HCT116 (cell line): ENCODE measurements at regions of chr15 and their contacts with region 1.

Region 1: GRCh38 chr15:80242132-80242769 is 9.8 kb downstream of the CTXND1 start:
- DNase-seq: peak; percentile 28
- ATAC-seq: peak; percentile 97
- H3K4me3 ChIP-seq: no peak overlapping the region
- H3K27ac ChIP-seq: no peak overlapping the region
- H3K4me1 ChIP-seq: peaks cover 0 to 5% of the 10 kb centered on the region in 2 experiments; a peak in 1 of 4 replicates
- H3K27me3 ChIP-seq: peaks cover 10% of the 10 kb centered on the region; the same call in 1 of the 2 replicates
- CTCF ChIP-seq: peak; percentile 62 to 95 (median 86); a peak in 5 of 6 replicates
- POLR2A ChIP-seq: no peak
- RAD21 ChIP-seq: peak; percentile 61

Region 2: DNA sequence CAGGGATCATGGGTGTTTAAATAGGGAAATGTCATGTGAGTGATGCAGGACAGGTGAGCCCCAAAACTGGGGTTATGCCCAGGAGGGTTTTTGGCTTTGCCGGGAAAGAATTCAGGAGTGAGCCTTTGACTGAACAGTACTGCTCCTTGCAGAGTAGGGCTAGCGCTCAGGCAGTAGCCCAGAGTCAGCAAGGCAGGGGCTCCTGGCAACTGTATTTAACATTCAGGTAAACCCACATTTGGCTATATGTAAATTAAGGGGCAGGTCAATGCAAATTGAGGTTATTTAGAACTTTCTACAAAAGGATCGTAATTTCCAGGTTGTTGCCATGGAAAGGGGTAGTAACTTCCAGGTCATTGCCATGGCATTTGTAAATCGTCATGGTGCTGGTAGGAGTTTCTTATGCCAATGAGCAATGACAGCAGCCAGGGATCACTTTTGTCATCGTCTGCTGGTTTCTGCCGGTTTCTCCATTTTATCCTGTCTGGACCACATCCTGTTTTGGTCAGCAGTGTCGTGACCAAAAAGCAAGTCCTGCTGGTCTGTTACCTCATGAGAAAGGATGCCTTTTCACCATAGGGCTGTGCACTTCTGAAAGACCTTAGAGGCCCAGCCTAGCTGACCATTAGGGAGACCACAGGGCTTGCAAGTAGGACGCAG is 369.8 kb before region 1 on chr15:
- CTCF ChIA-PET with region 1: no interaction called
- POLR2A ChIA-PET with region 1: no interaction called
- RAD21 ChIA-PET with region 1: no interaction called
- intact Hi-C with region 1: no loop called
- DNase-seq: no peak
- ATAC-seq: no peak
- H3K4me3 ChIP-seq: no peak overlapping the region
- H3K27ac ChIP-seq: no peak overlapping the region
- H3K4me1 ChIP-seq: peaks cover 6 to 11% of the 10 kb centered on the region in 2 experiments; a peak in 2 of 4 replicates
- H3K27me3 ChIP-seq: no peaks in the 10 kb centered on the region
- CTCF ChIP-seq: no peak
- POLR2A ChIP-seq: no peak
- RAD21 ChIP-seq: no peak

Region 3: DNA sequence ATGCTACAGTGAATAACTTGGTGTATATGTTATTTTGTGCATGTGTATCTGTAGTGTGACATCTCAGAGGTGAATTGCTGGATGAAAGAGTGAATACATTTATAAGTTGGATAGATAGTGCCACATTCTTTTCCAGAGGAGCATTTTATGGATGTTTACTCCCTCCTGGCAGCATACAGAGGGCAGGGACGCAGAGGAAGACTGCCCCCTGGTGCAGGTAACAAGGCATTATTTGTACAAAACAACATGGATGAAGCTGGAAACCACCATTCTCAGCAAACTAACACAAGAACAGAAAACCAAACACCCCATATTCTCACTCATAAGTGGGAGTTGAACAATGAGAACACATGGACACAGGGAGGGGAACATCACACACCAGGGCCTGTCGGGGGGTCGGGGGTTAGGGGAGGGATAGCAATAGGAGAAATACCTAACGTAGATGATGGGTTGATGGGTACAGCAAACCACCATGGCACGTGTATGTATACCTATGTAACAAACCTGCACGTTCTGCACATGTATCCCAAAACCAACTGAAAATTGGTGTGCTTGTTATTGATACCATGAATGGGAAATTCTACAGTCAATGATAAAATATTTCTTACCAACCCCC is 67.6 kb after region 1 on chr15:
- CTCF ChIA-PET with region 1: interaction called, 4 read pairs
- POLR2A ChIA-PET with region 1: no interaction called
- RAD21 ChIA-PET with region 1: interaction called in 1 of 2 experiments, 7 read pairs
- intact Hi-C with region 1: loop called (anchors 1 kb)
- DNase-seq: peak; percentile 4
- ATAC-seq: peak; percentile 81
- H3K4me3 ChIP-seq: no peak overlapping the region
- H3K27ac ChIP-seq: no peak overlapping the region
- H3K4me1 ChIP-seq: no peaks in the 10 kb centered on the region
- H3K27me3 ChIP-seq: peaks cover 7% of the 10 kb centered on the region; the same call in 1 of the 2 replicates
- CTCF ChIP-seq: peak; percentile 53 to 60 (median 59); a peak in 5 of 6 replicates
- POLR2A ChIP-seq: no peak
- RAD21 ChIP-seq: peak; percentile 70

Region 4: DNA sequence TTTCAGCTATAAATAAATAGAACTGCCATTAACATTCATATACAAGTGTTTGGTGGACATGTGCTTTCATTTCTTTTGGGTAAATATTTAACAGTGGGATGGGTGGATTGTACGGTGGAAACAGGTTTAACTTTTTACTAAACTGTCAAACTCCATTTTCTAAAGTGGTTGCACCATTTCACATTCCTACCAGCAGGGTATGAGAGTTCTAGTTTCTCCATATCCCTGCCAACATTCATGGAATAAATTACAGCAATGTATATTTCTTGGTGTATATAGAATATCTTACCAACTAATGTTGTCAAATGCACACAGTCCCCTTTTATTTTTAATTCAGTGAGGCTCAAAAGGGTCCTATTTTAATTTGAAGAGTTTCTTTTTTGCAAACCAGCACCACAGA is 81.0 kb after region 1 on chr15:
- CTCF ChIA-PET with region 1: no interaction called
- POLR2A ChIA-PET with region 1: no interaction called
- RAD21 ChIA-PET with region 1: no interaction called
- intact Hi-C with region 1: no loop called
- DNase-seq: peak; percentile 4
- ATAC-seq: no peak
- H3K4me3 ChIP-seq: no peak overlapping the region
- H3K27ac ChIP-seq: no peak overlapping the region
- H3K4me1 ChIP-seq: no peaks in the 10 kb centered on the region
- H3K27me3 ChIP-seq: no peaks in the 10 kb centered on the region; the same call in 1 of the 2 replicates
- CTCF ChIP-seq: peak in 2 of 3 experiments; percentile 47 to 61; a peak in 4 of 6 replicates
- POLR2A ChIP-seq: no peak
- RAD21 ChIP-seq: no peak

Region 5: GRCh38 chr15:80367094-80367493 is 124.8 kb after region 1 on chr15:
- CTCF ChIA-PET with region 1: no interaction called
- POLR2A ChIA-PET with region 1: no interaction called
- RAD21 ChIA-PET with region 1: no interaction called
- intact Hi-C with region 1: loop called (anchors 1 kb)
- DNase-seq: peak; percentile 45
- ATAC-seq: peak; percentile 86
- H3K4me3 ChIP-seq: no peak overlapping the region
- H3K27ac ChIP-seq: no peak overlapping the region
- H3K4me1 ChIP-seq: no peaks in the 10 kb centered on the region
- H3K27me3 ChIP-seq: peaks cover 8% of the 10 kb centered on the region; the same call in 1 of the 2 replicates
- CTCF ChIP-seq: peak; percentile 47 to 65 (median 51); a peak in 5 of 6 replicates
- POLR2A ChIP-seq: no peak
- RAD21 ChIP-seq: peak; percentile 70

Region 6: GRCh38 chr15:80695104-80695910 is 453.1 kb after region 1 on chr15 and contains the start of gene ABHD17C:
- CTCF ChIA-PET with region 1: no interaction called
- POLR2A ChIA-PET with region 1: no interaction called
- RAD21 ChIA-PET with region 1: no interaction called
- intact Hi-C with region 1: no loop called
- DNase-seq: no peak
- ATAC-seq: peak; percentile 80
- H3K4me3 ChIP-seq: peak within 1 kb of the TSS; percentile 79 to 81
- H3K27ac ChIP-seq: peak within 1 kb of the TSS; percentile 81
- H3K4me1 ChIP-seq: peaks cover 5 to 20% of the 10 kb centered on the region in 2 experiments; a peak in 3 of 4 replicates
- H3K27me3 ChIP-seq: no peaks in the 10 kb centered on the region
- CTCF ChIP-seq: no peak
- POLR2A ChIP-seq: no peak
- RAD21 ChIP-seq: no peak
- total RNA-seq, gene ABHD17C: 27.9 TPM